Activated naive CD4-positive, alpha-beta T cell treated with anti-CD3 and anti-CD28 coated beads, Interleukin-2, amount 10 ng/mL, durations not matched to agents 7 days and 5 days (primary cell): ENCODE measurements at regions of chr11 and their contacts with region 1.

Region 1: GRCh38 chr11:10091314-10092045 is 202.5 kb downstream of the SBF2 start:
- DNase-seq: no peak
- H3K4me3 Mint-ChIP-seq: no peak overlapping the region
- H3K27ac Mint-ChIP-seq: no peak overlapping the region
- H3K4me1 Mint-ChIP-seq: peaks cover 7% of the 10 kb centered on the region
- H3K27me3 Mint-ChIP-seq: no peaks in the 10 kb centered on the region

Region 2: DNA sequence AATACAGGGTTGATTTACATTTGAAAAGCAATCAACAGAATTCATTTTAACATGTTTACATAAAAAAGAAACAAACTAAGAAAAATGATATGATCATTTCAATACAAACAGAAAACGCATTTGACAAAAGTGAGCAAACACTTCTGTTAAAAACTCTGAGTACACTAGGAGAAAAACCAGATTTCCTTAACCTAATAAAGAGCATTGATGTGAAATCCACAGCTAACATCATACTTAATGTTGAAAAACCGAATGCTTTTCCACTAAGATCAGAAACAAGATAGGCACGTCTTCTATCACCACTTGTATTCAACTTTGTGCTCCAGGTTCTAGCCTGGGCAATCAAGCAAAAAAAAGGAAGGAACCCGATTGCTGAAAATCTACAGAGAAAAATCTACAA is 25.0 kb before region 1 on chr11:
- CTCF ChIA-PET with region 1: no interaction called
- DNase-seq: no peak
- H3K4me3 Mint-ChIP-seq: no peak overlapping the region
- H3K27ac Mint-ChIP-seq: no peak overlapping the region
- H3K4me1 Mint-ChIP-seq: no peaks in the 10 kb centered on the region
- H3K27me3 Mint-ChIP-seq: no peaks in the 10 kb centered on the region

Region 3: DNA sequence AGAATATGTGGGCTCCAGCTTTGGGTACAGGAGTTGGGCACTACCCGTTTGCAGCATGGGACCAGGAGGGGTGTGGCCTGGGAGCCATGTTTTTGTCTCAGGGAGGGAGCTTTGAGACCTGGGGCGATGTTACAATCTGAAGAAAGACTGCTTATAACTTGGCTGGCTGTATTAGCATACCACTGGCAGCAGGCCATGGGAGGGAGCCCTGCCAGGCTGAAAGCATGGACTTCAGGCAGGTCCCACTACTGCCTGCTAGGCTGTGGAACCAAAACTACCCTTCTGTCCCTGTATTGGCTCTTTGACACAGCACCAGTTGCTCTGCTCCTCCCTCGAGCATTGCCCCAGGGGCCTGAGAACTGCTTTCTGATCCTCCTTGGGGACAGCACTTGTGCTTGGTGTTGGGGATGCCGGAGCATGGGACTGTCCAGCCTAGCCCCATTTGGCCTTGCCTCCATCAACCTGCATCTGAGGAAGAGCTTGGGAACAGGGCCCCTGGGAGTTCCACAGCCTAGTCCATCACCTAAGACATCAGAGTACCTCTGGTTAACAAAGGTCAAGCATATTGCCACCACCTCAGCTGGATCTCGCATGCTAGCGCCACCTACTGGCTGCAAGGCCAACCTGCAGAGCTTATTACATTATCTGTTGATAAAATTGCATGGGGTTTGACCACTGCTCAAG is 14.9 kb before region 1 on chr11:
- CTCF ChIA-PET with region 1: interaction called, 13 read pairs
- DNase-seq: peak; percentile 51
- H3K4me3 Mint-ChIP-seq: no peak overlapping the region
- H3K27ac Mint-ChIP-seq: no peak overlapping the region
- H3K4me1 Mint-ChIP-seq: no peaks in the 10 kb centered on the region
- H3K27me3 Mint-ChIP-seq: no peaks in the 10 kb centered on the region

Region 4: DNA sequence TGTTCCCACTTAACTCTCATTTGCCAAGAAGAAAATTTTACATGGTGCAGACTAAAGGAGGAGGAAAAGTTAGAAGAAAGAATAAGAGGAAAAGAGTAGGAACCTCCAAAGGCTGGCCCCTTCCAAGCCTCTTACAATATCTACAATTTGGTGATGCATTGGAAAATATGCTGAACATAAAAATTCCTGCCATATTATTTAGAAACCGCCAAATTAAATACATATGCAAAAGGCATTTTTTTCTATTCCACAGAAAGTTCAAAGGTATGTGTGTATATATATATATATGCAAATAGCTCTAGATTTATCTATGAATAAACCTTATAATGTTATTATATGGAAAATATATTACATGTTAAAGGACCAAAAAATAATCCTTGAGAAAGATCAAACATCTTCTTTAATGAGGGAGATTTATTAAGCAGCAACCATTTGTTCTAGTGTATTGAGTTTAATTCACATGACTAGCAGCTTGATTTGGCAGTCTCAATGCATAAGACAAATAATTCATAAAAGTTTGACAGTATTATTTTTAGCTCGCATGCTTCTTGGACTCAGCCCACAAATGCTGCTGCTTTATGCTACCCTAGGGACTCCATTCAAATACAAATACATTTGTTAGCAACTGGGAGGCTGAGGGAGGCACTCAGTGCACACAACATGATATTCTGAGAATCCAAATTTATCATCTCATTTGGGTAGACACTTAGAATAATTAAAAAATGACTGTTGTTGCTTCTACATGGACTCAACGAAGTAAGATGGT is 17.6 kb after region 1 on chr11:
- CTCF ChIA-PET with region 1: no interaction called
- DNase-seq: no peak
- H3K4me3 Mint-ChIP-seq: no peak overlapping the region
- H3K27ac Mint-ChIP-seq: no peak overlapping the region
- H3K4me1 Mint-ChIP-seq: no peaks in the 10 kb centered on the region
- H3K27me3 Mint-ChIP-seq: no peaks in the 10 kb centered on the region